Activated CD8-positive, alpha-beta memory T cell treated with anti-CD3 and anti-CD28 coated beads, Interleukin-2, amount 10 ng/mL, durations not matched to agents 7 days and 5 days (primary cell): ENCODE measurements at regions of chr3 and their contacts with region 1.

Region 1: DNA sequence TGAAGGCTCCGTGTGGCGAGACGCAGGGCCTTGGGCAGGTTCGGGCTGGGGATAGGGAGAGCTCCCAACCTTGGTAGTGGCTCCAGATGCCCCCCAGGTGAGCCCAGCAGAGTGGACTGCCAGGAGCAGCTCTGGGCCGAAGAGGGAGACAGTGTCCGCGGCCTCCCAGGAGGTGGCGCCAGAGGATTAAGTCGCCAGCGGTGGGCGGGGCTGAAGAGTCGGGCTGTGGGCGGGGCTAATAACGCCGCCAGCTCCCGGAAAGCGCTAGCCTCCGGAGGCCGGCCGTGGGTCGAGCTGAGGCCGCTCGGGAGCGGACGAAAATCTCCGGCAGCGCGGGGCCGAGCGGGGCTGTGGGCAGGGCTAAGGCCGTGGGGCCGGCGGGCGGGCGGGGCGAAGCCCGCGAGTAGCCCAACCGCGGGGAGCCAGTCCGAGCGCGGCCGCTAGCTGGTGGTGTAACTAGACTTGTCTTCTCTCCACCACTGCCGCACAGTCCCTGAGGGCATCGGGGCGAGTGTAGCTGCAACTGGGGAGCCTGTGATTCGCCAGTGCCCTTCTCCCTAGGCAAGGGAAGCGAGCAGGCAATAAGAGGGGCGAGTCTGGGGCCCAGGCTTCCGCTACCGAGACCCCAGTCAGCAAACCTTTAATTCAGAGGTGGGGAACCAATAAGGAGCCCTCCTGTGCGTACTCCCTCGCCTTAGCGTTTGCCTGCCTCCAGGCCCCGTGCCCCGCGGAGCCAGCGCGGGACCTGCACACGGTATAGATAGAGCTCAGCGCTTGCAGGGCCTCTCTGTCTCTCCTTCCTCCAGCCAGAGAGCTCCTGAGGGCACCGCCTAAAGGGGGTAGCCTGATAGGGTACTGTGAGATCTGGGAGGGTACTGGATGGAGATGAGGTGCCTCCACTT is 14.4 kb upstream of the BSN start:
- DNase-seq: peak; percentile 93
- ATAC-seq: peak; percentile 92
- H3K4me3 Mint-ChIP-seq: peak overlapping the region; percentile 68
- H3K27ac Mint-ChIP-seq: peak overlapping the region; percentile 28
- H3K4me1 Mint-ChIP-seq: peaks cover 3% of the 10 kb centered on the region
- H3K27me3 Mint-ChIP-seq: peaks cover 17% of the 10 kb centered on the region

Region 2: DNA sequence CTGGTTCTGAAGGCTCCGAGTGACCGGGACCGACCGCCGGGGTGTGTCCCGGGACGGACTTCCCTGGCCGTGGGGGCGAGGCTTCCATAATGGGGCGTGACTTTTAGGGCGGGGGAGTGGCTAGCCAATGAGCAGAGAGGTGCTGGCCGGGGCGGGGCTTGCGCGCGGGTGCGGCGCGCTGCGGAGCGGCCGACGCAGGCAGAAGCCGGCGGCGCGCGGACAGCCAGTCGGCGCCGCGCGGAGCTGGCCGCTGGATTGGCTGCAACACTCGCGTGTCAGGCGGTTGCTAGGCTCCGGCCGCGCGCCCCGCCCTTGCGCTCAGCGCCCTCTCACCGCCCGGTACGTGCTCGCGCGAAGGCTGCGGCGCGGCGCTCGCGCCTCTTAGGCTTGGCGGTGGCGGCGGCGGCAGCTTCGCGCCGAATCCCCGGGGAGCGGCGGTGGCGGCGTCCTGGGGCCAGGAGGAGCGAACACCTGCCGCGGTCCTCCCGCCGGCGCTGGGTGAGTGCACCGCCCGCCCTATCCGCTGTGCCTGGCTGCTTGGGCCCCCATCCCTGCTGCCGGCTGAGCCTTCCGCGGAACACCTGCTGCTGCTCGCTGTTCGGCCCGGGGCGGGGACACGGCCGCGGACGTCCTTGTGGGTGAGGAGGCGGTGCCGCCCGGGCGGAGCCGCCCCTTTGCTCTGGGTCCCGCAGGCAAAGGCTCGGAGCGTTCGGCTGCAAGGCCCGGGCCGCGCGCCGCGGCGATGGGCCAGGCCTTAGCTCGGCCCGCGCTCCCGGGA is 69.8 kb before region 1 on chr3 and contains the start of gene DAG1:
- CTCF ChIA-PET with region 1: interaction called, 12 read pairs
- DNase-seq: peak; percentile 97
- ATAC-seq: peak; percentile 90
- H3K4me3 Mint-ChIP-seq: peak within 1 kb of the TSS; percentile 87
- H3K27ac Mint-ChIP-seq: peak within 1 kb of the TSS; percentile 90
- H3K4me1 Mint-ChIP-seq: peaks cover 22% of the 10 kb centered on the region
- H3K27me3 Mint-ChIP-seq: no peaks in the 10 kb centered on the region
- total RNA-seq, gene DAG1: 17.6 to 17.9 TPM

Region 3: DNA sequence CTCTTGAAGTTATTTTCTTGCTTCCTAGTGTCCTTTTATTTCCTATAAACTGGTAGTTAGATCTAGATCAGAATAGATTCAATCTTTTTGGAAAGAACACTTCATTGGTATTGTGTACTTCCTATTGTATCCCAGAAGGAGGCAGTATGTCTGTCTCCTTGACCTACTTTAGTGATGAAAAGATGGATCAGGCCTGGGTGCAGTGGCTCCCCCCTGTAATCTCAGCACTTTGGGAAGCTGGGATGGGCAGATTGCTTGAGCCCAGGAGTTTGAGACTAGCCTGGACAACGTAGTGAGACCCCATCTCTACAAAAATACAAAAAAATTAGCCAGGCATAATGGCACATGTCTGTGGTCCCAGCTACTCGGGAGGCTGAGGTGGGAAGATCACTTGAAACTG is 26.4 kb after region 1 on chr3:
- CTCF ChIA-PET with region 1: interaction called, 15 read pairs
- DNase-seq: no peak
- ATAC-seq: no peak
- H3K4me3 Mint-ChIP-seq: no peak overlapping the region
- H3K27ac Mint-ChIP-seq: no peak overlapping the region
- H3K4me1 Mint-ChIP-seq: no peaks in the 10 kb centered on the region
- H3K27me3 Mint-ChIP-seq: peaks cover 22% of the 10 kb centered on the region

Region 4: GRCh38 chr3:49638445-49638844 is 98.5 kb after region 1 on chr3:
- CTCF ChIA-PET with region 1: interaction called, 15 read pairs
- DNase-seq: no peak
- ATAC-seq: no peak
- H3K4me3 Mint-ChIP-seq: no peak overlapping the region
- H3K27ac Mint-ChIP-seq: no peak overlapping the region
- H3K4me1 Mint-ChIP-seq: peaks cover 8% of the 10 kb centered on the region
- H3K27me3 Mint-ChIP-seq: peaks cover 2% of the 10 kb centered on the region

Region 5: DNA sequence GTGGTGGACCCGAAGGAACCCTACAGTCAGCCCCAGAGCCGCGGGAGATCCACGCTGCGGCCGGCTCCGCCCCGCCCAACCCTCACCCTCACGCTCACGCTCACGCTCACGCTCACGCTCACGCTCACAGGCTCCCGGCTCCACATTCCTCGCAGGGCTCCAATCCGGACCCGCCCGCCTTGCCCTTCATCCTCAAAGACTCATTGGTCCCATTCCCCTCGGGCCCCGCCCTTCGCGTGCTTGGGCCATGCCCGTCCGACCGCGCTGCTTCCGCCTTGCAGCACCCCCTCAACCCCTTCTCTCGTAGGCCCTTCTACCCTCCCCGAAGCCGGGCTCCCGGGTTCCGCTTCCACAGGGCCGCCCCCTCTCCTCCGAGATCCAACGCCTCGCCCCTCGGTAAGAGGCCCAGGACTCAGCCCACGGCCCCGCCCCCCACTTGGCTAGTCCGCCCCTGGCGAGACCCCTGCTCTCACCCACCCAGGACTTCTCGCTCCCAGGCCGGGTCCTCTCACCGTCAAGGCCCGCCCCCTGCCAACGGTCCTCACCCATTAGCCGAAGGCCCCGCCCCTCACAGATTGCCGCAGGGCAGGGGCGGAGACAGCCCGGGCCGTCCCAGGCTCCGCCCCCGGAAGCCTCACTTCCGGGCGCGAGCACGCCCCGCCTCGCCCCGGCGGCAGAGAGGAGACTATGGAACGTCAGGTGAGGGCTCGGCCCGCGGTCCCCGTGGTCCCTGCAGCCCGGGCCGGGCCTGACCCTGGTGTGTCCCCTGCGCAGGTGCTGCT is 134.0 kb after region 1 on chr3 and contains the start of gene APEH:
- CTCF ChIA-PET with region 1: interaction called, 272 read pairs
- DNase-seq: peak; percentile 99
- ATAC-seq: peak; percentile 87
- H3K4me3 Mint-ChIP-seq: peak within 1 kb of the TSS; percentile 96
- H3K27ac Mint-ChIP-seq: peak within 1 kb of the TSS; percentile 99
- H3K4me1 Mint-ChIP-seq: peaks cover 34% of the 10 kb centered on the region
- H3K27me3 Mint-ChIP-seq: no peaks in the 10 kb centered on the region
- total RNA-seq, gene APEH: 150 to 172 TPM

Region 6: DNA sequence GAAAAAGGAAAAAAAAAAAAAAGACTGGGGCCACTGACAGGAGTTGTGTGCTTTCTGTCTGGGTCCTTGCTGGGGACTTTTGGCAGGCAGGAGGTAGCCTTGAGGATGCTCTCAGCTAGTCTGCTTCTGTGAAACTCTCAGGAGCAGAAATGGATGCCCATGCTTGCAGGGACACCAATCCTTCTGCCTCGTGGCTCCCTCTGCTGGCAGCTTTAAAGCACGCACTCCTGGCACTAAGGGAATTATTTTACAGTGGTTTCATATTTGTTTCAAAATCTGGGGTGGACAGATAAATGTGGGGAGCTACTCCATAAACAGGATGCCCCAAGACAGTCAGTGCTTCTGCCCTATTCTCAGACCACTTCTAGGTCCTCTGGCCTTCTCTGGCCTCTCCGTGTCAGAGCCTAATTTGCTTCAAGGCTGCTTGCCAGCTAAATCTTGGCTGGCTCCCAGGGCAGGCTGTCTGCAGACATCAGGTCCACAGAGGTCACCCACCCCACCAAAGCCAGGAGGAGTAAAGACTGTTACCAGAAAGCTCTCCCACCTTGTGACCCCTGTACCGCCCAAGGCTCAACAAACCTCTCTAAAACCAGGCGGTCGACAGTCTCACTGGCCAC is 299.4 kb after region 1 on chr3:
- CTCF ChIA-PET with region 1: interaction called, 11 read pairs
- DNase-seq: peak; percentile 87
- ATAC-seq: peak; percentile 91
- H3K4me3 Mint-ChIP-seq: no peak overlapping the region
- H3K27ac Mint-ChIP-seq: no peak overlapping the region
- H3K4me1 Mint-ChIP-seq: peaks cover 1% of the 10 kb centered on the region
- H3K27me3 Mint-ChIP-seq: no peaks in the 10 kb centered on the region